CD4-positive, alpha-beta T cell (primary cell): ENCODE measurements at regions of chr4 and their contacts with region 1.

Region 1: DNA sequence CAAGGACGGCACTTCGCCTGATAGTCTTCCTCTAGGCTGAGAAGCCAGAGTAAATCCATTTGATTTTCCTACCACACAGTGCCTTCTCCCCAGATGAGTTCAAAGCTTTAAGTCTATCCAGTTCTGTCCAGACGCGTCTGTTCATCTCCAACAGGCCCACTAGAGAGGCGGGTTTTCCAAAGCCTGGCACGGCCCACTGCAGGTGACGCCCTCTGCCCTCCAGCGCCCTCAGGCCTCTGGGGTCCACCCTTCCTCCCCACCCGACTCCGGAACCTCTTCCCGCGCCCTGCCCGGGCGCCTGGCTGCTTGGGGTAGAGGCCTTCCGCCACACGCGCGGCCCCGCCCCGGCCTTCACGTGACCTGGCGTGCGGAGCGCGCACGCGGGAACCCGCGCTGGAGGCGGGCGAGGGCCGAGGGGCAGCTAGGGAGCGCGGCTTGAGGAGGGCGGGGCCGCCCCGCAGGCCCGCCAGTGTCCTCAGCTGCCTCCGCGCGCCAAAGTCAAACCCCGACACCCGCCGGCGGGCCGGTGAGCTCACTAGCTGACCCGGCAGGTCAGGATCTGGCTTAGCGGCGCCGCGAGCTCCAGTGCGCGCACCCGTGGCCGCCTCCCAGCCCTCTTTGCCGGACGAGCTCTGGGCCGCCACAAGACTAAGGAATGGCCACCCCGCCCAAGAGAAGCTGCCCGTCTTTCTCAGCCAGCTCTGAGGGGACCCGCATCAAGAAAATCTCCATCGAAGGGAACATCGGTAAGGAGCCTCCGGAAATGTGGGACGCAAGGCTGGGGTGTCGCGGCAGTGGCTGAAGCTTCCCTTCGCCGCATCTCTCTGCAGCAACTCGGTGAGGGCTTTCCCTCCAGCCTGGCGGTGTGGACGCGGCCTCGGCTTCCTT is at the start of gene DCK:
- DNase-seq: peak; percentile 64 to 93 (median 79)
- ATAC-seq: peak; percentile 77
- H3K4me3 ChIP-seq: peak within 1 kb of the TSS; percentile 95
- H3K4me3 Mint-ChIP-seq: peak within 1 kb of the TSS; percentile 93
- H3K27ac ChIP-seq: peak within 1 kb of the TSS; percentile 82
- H3K27ac Mint-ChIP-seq: peak within 1 kb of the TSS; percentile 85
- H3K4me1 ChIP-seq: peaks cover 20% of the 10 kb centered on the region
- H3K4me1 Mint-ChIP-seq: peaks cover 59% of the 10 kb centered on the region
- H3K27me3 ChIP-seq: no peaks in the 10 kb centered on the region
- H3K27me3 Mint-ChIP-seq: no peaks in the 10 kb centered on the region
- CTCF ChIP-seq: no peak
- total RNA-seq, gene DCK: 12.8 to 13.9 TPM

Region 2: DNA sequence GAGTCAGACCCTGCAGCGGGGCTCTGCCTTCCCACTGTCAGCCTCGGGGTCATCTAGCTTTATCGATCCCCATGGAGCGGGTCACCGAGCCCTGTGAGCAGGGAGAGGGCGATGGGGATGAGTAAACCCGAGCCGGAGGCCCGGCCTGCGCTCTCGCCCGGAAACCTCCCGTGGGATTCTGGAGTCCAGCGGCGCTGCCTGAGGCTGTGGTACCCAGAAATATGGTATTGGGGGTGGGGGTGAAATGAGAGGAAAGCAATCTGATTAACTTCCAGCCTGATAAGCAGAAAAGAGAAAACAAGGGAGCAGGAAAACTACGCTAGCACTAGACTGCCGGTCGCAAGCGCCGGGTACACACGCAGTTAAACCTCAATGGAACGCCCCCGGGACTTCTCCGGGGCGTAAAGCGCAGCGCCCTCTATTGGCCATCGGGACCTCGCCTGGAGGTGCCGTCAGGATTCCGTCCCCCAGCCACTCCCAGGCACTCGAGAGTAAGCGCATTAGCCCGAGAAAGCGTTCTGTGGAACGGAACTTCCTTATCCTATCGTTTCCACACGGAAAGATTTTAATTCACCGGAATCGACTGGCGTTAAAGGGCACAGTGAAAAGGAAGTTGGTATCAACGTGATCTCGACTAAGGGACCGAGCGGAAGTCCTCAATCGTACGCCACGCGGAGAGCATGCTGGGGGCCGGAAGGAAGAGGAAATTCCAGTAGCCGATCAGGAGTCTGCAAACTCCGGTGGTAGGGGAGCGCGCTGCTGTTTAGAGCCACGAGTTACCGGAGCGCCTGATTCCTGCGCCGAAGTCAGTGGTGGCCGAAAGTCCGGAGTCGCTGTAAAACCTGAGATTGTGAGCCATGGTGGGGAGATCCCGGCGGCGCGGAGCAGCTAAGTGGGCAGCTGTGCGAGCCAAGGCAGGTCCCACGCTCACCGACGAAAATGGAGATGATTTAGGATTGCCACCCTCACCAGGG is 305.3 kb before region 1 on chr4 and contains the start of gene UTP3:
- CTCF ChIA-PET with region 1: no interaction called
- POLR2A ChIA-PET with region 1: interaction called, 4 read pairs
- intact Hi-C with region 1: loop called in 1 of 2 experiments (anchors 10 kb)
- DNase-seq: peak; percentile 87 to 98 (median 90)
- ATAC-seq: peak; percentile 87
- H3K4me3 ChIP-seq: peak within 1 kb of the TSS; percentile 74
- H3K4me3 Mint-ChIP-seq: peak within 1 kb of the TSS; percentile 91
- H3K27ac ChIP-seq: peak within 1 kb of the TSS; percentile 94 to 97
- H3K27ac Mint-ChIP-seq: peak within 1 kb of the TSS; percentile 99
- H3K4me1 ChIP-seq: peaks cover 26% of the 10 kb centered on the region
- H3K4me1 Mint-ChIP-seq: peaks cover 45% of the 10 kb centered on the region
- H3K27me3 ChIP-seq: no peaks in the 10 kb centered on the region
- H3K27me3 Mint-ChIP-seq: no peaks in the 10 kb centered on the region
- CTCF ChIP-seq: peak; percentile 98
- total RNA-seq, gene UTP3: 19.2 to 20.5 TPM

Region 3: GRCh38 chr4:70901984-70902576 is 91.3 kb before region 1 on chr4 and contains the start of gene MOB1B:
- CTCF ChIA-PET with region 1: interaction called, 3 read pairs
- POLR2A ChIA-PET with region 1: interaction called, 16 read pairs
- intact Hi-C with region 1: loop called in 1 of 2 experiments (anchors 5 kb)
- DNase-seq: peak; percentile 69 to 92 (median 82)
- ATAC-seq: peak; percentile 97
- H3K4me3 ChIP-seq: peak within 1 kb of the TSS; percentile 74
- H3K4me3 Mint-ChIP-seq: peak within 1 kb of the TSS; percentile 100
- H3K27ac ChIP-seq: peak within 1 kb of the TSS in 1 of 2 donors; percentile 16
- H3K27ac Mint-ChIP-seq: peak within 1 kb of the TSS; percentile 85
- H3K4me1 ChIP-seq: peaks cover 16% of the 10 kb centered on the region
- H3K4me1 Mint-ChIP-seq: peaks cover 48% of the 10 kb centered on the region
- H3K27me3 ChIP-seq: no peaks in the 10 kb centered on the region
- H3K27me3 Mint-ChIP-seq: no peaks in the 10 kb centered on the region
- CTCF ChIP-seq: peak; percentile 27
- total RNA-seq, gene MOB1B: 13.1 to 13.4 TPM

Region 4: DNA sequence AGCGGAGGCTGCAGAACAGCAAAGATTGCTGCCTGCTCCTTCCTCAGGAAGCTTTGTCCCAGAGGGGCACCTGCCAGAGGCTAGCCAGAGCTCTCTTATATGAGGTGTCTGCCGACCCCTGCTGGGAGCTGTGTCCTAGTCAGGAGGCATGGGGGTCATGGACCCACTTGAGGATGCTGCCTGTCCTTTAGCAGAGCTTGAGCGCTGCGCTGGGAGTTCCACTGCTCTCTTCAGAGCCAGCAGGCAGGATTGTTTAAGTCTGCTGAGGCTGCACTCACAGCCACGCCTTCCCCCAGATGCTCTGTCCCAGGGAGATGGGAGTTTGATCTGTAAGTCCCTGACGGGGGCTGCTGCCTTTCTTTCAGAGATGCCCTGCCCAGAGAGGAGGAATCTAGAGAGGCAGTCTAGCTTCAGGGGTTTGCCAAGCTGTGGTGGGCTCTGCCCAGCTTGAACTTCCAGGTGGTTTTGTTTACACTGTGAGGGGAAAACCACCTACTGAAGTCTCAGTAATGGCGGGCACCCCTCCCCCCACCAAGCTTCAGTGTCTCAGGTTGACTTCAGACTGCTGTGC is 10.9 kb after region 1 on chr4:
- CTCF ChIA-PET with region 1: interaction called, 10 read pairs
- POLR2A ChIA-PET with region 1: interaction called, 40 read pairs
- intact Hi-C with region 1: loop called (anchors 1 to 2 kb)
- DNase-seq: peak in 13 of 14 experiments; percentile 11 to 82 (median 48)
- ATAC-seq: peak; percentile 79
- H3K4me3 ChIP-seq: peak overlapping the region; percentile 12
- H3K4me3 Mint-ChIP-seq: peak overlapping the region; percentile 56
- H3K27ac ChIP-seq: peak overlapping the region; percentile 48 to 55
- H3K27ac Mint-ChIP-seq: peak overlapping the region; percentile 75
- H3K4me1 ChIP-seq: peaks cover 33% of the 10 kb centered on the region
- H3K4me1 Mint-ChIP-seq: peaks cover 91% of the 10 kb centered on the region
- H3K27me3 ChIP-seq: no peaks in the 10 kb centered on the region
- H3K27me3 Mint-ChIP-seq: no peaks in the 10 kb centered on the region
- CTCF ChIP-seq: no peak